ENCODE measurements at regions of chr17 and their contacts with region 1.

Region 1: GRCh38 chr17:34542700-34543336 is 36.6 kb upstream of the TMEM132E start:
- DNase-seq: peak; percentile 40 to 75
- ATAC-seq: peak in 1 of 3 donors; percentile 68
- H3K4me3 ChIP-seq: no peak overlapping the region
- H3K4me3 Mint-ChIP-seq: no peak overlapping the region
- H3K27ac ChIP-seq: no peak overlapping the region
- H3K27ac Mint-ChIP-seq: no peak overlapping the region
- H3K4me1 ChIP-seq: no peaks in the 10 kb centered on the region
- H3K4me1 Mint-ChIP-seq: no peaks in the 10 kb centered on the region
- H3K27me3 ChIP-seq: no peaks in the 10 kb centered on the region
- H3K27me3 Mint-ChIP-seq: peaks cover 9 to 37% of the 10 kb centered on the region in 2 donors
- CTCF ChIP-seq: peak; percentile 81

Region 2: GRCh38 chr17:34527908-34528470 is 14.8 kb before region 1 on chr17:
- intact Hi-C with region 1: no loop called
- DNase-seq: no peak
- ATAC-seq: no peak
- H3K4me3 ChIP-seq: no peak overlapping the region
- H3K4me3 Mint-ChIP-seq: no peak overlapping the region
- H3K27ac ChIP-seq: no peak overlapping the region
- H3K27ac Mint-ChIP-seq: no peak overlapping the region
- H3K4me1 ChIP-seq: no peaks in the 10 kb centered on the region
- H3K4me1 Mint-ChIP-seq: no peaks in the 10 kb centered on the region
- H3K27me3 ChIP-seq: peaks cover 2% of the 10 kb centered on the region
- H3K27me3 Mint-ChIP-seq: peaks cover 26 to 53% of the 10 kb centered on the region in 2 donors
- CTCF ChIP-seq: no peak

Region 3: GRCh38 chr17:34637548-34638525 is 95.0 kb after region 1 on chr17:
- intact Hi-C with region 1: loop called (anchors 1 kb)
- DNase-seq: peak; percentile 71 to 92
- ATAC-seq: peak; percentile 93 to 97 (median 96)
- H3K4me3 ChIP-seq: peak overlapping the region; percentile 71
- H3K4me3 Mint-ChIP-seq: peak overlapping the region; percentile 86
- H3K27ac ChIP-seq: no peak overlapping the region
- H3K27ac Mint-ChIP-seq: peak overlapping the region in 1 of 2 donors; percentile 40
- H3K4me1 ChIP-seq: peaks cover 22% of the 10 kb centered on the region
- H3K4me1 Mint-ChIP-seq: peaks cover 0 to 21% of the 10 kb centered on the region in 2 donors
- H3K27me3 ChIP-seq: peaks cover 2% of the 10 kb centered on the region
- H3K27me3 Mint-ChIP-seq: peaks cover 25 to 41% of the 10 kb centered on the region in 2 donors
- CTCF ChIP-seq: peak; percentile 87

Region 4: GRCh38 chr17:34665150-34665806 is 122.5 kb after region 1 on chr17:
- intact Hi-C with region 1: no loop called
- DNase-seq: peak in 1 of 2 donors; percentile 17
- ATAC-seq: no peak
- H3K4me3 ChIP-seq: no peak overlapping the region
- H3K4me3 Mint-ChIP-seq: no peak overlapping the region
- H3K27ac ChIP-seq: no peak overlapping the region
- H3K27ac Mint-ChIP-seq: no peak overlapping the region
- H3K4me1 ChIP-seq: no peaks in the 10 kb centered on the region
- H3K4me1 Mint-ChIP-seq: peaks cover 0 to 6% of the 10 kb centered on the region in 2 donors
- H3K27me3 ChIP-seq: peaks cover 2% of the 10 kb centered on the region
- H3K27me3 Mint-ChIP-seq: peaks cover 16 to 24% of the 10 kb centered on the region in 2 donors
- CTCF ChIP-seq: no peak

Region 5: GRCh38 chr17:34980681-34981537 is 438.1 kb after region 1 on chr17:
- intact Hi-C with region 1: loop called (anchors 10 kb)
- DNase-seq: peak; percentile 85 to 88
- ATAC-seq: peak; percentile 86 to 92 (median 88)
- H3K4me3 ChIP-seq: peak overlapping the region; percentile 92
- H3K4me3 Mint-ChIP-seq: peak overlapping the region; percentile 93
- H3K27ac ChIP-seq: peak overlapping the region; percentile 99
- H3K27ac Mint-ChIP-seq: peak overlapping the region; percentile 93 to 97
- H3K4me1 ChIP-seq: peaks cover 10% of the 10 kb centered on the region
- H3K4me1 Mint-ChIP-seq: peaks cover 38 to 42% of the 10 kb centered on the region in 2 donors
- H3K27me3 ChIP-seq: no peaks in the 10 kb centered on the region
- H3K27me3 Mint-ChIP-seq: no peaks in the 10 kb centered on the region
- CTCF ChIP-seq: no peak

Region 6: GRCh38 chr17:35747540-35748017 is 1204.8 kb after region 1 on chr17:
- intact Hi-C with region 1: loop called (anchors 2 kb)
- DNase-seq: peak; percentile 76 to 91
- ATAC-seq: peak; percentile 88 to 99 (median 99)
- H3K4me3 ChIP-seq: no peak overlapping the region
- H3K4me3 Mint-ChIP-seq: no peak overlapping the region
- H3K27ac ChIP-seq: no peak overlapping the region
- H3K27ac Mint-ChIP-seq: no peak overlapping the region
- H3K4me1 ChIP-seq: peaks cover 6% of the 10 kb centered on the region
- H3K4me1 Mint-ChIP-seq: peaks cover 0 to 4% of the 10 kb centered on the region in 2 donors
- H3K27me3 ChIP-seq: peaks cover 17% of the 10 kb centered on the region
- H3K27me3 Mint-ChIP-seq: peaks cover 42 to 43% of the 10 kb centered on the region in 2 donors
- CTCF ChIP-seq: peak; percentile 91

Measured in natural killer cell (primary cell).